HCT116 (cell line): ENCODE measurements at regions of chr1 and their contacts with region 1.

Region 1: DNA sequence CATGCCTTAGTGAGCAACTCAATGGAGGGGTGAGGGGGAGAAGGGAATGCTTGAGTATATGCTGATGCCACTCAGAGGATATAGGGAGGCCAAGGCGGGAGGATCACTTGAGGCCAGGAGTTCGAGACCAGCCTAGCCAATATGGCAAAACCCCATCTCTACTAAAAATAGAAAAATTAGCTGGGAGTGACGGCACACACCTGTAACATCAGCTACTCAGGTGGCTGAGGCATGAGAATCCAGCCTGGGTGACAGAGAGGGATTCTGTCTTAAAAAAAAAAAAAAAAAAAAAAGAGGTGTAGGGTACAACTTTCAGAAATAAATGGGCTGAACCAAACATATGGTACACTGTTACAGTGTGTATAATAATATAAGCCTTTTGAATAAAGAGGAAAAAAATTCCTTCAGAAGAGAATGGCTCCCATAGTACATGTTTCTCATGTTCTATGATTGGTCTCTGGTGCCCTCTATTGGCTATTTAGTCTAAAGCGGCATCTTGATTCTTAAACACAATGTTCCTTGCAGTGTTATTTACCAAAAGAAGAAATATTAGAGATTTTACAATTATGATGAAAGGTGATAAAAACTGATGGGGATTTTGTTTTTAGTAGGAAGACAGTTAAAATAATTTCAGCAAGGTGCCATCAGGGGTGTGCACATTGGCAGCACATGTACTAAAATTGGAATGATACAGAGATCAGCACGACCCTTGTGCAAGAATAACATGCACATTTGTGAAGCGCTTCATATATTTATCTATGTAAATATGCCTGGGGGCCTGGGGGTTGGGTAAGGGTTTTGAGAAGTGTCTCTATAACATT is 109.8 kb downstream of the PATJ start:
- DNase-seq: peak; percentile 56
- ATAC-seq: peak; percentile 84
- H3K4me3 ChIP-seq: no peak overlapping the region
- H3K27ac ChIP-seq: no peak overlapping the region
- H3K4me1 ChIP-seq: no peaks in the 10 kb centered on the region
- H3K27me3 ChIP-seq: no peaks in the 10 kb centered on the region
- CTCF ChIP-seq: peak; percentile 57 to 74 (median 60); a peak in 5 of 6 replicates
- POLR2A ChIP-seq: no peak
- RAD21 ChIP-seq: peak; percentile 80

Region 2: DNA sequence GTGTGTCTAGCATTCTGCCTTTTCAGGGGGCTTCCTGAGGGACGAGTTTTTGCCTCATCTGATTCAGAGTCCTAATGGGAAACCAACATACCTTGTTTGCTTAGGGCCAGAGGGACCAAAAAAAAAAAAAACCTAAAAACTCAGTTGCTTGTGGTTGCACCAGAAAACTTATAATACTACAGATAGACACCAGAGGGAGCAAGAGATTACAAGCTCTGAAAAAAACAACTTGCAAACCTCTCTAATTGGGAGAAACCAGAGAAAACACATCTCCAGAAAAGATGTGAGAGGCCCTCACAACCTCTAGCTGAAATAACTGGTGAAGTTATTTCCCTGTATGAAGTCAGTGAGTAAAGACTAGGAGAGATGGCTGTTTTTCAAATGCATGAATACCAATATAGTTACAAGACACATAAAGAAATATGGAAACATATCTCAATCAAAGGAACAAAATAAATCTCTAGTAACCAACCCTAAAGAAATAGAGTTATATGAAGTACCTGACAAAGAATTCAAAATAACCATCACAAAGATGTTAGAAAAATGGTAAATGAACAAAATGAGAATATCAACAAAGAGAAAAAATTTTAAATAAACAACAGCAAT is 1003.4 kb before region 1 on chr1:
- CTCF ChIA-PET with region 1: interaction called, 3 read pairs
- POLR2A ChIA-PET with region 1: no interaction called
- RAD21 ChIA-PET with region 1: no interaction called
- intact Hi-C with region 1: loop called (anchors 2 kb)
- DNase-seq: peak; percentile 54
- ATAC-seq: peak; percentile 69
- H3K4me3 ChIP-seq: no peak overlapping the region
- H3K27ac ChIP-seq: no peak overlapping the region
- H3K4me1 ChIP-seq: no peaks in the 10 kb centered on the region
- H3K27me3 ChIP-seq: no peaks in the 10 kb centered on the region
- CTCF ChIP-seq: peak; percentile 51 to 69 (median 60); a peak in 4 of 6 replicates
- POLR2A ChIP-seq: no peak
- RAD21 ChIP-seq: peak; percentile 74

Region 3: GRCh38 chr1:60978421-60979357 is 873.4 kb before region 1 on chr1:
- CTCF ChIA-PET with region 1: no interaction called
- POLR2A ChIA-PET with region 1: no interaction called
- RAD21 ChIA-PET with region 1: no interaction called
- intact Hi-C with region 1: loop called (anchors 1 kb)
- DNase-seq: no peak
- ATAC-seq: peak; percentile 95
- H3K4me3 ChIP-seq: no peak overlapping the region
- H3K27ac ChIP-seq: no peak overlapping the region
- H3K4me1 ChIP-seq: no peaks in the 10 kb centered on the region
- H3K27me3 ChIP-seq: no peaks in the 10 kb centered on the region
- CTCF ChIP-seq: peak; percentile 71 to 74 (median 74); a peak in 5 of 6 replicates
- POLR2A ChIP-seq: no peak
- RAD21 ChIP-seq: peak; percentile 88

Region 4: GRCh38 chr1:61056573-61057439 is 795.3 kb before region 1 on chr1:
- CTCF ChIA-PET with region 1: no interaction called
- POLR2A ChIA-PET with region 1: no interaction called
- RAD21 ChIA-PET with region 1: no interaction called
- intact Hi-C with region 1: loop called (anchors 5 kb)
- DNase-seq: peak; percentile 50
- ATAC-seq: peak; percentile 51
- H3K4me3 ChIP-seq: peak overlapping the region; percentile 66 to 70
- H3K27ac ChIP-seq: peak overlapping the region; percentile 44
- H3K4me1 ChIP-seq: peaks cover 3 to 12% of the 10 kb centered on the region in 2 experiments; a peak in 2 of 4 replicates
- H3K27me3 ChIP-seq: no peaks in the 10 kb centered on the region
- CTCF ChIP-seq: no peak
- POLR2A ChIP-seq: no peak
- RAD21 ChIP-seq: no peak

Region 5: DNA sequence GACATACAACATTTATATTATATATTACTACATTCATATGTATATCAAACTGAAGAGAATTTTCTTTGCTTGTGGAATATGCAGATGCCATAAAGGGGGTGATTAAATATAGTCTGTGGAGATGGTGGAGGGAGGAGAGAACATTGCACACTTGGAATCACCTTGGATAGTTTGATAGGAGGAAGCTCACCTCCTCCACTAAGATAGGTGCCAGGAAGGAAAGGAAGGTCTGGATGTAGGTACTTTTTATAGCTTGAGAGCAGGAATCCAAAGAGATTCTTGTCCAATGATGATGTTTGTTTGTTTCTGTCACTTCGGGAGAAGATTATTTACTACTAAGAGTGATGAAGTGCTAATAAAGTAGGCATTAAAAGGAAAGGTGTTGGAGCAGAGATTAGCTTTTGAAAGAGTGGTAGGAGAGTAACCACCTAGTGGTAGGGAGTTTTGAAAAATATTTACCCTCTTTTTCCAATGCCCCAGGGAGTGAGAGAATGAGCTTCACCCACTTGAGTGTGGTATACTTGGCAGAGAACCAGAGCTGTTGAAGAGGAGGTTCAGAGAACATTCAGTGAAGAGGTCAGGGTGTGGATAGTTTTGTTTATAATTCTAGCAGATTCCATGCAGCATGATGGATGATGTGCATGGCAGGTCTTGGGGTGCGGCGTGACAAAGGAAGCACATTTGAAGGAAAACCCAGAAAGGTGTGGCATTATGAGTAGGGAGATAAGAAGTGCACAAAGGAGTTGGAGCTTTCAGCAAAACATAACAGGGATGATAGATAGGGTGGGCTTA is 35.2 kb after region 1 on chr1:
- CTCF ChIA-PET with region 1: no interaction called
- POLR2A ChIA-PET with region 1: no interaction called
- RAD21 ChIA-PET with region 1: no interaction called
- intact Hi-C with region 1: no loop called
- DNase-seq: no peak
- ATAC-seq: no peak
- H3K4me3 ChIP-seq: no peak overlapping the region
- H3K27ac ChIP-seq: no peak overlapping the region
- H3K4me1 ChIP-seq: peaks cover 0 to 4% of the 10 kb centered on the region in 2 experiments; a peak in 2 of 4 replicates
- H3K27me3 ChIP-seq: no peaks in the 10 kb centered on the region
- CTCF ChIP-seq: no peak
- POLR2A ChIP-seq: no peak
- RAD21 ChIP-seq: no peak